CD4-positive, alpha-beta T cell (primary cell): ENCODE measurements at regions of chr3 and their contacts with region 1.

Region 1: DNA sequence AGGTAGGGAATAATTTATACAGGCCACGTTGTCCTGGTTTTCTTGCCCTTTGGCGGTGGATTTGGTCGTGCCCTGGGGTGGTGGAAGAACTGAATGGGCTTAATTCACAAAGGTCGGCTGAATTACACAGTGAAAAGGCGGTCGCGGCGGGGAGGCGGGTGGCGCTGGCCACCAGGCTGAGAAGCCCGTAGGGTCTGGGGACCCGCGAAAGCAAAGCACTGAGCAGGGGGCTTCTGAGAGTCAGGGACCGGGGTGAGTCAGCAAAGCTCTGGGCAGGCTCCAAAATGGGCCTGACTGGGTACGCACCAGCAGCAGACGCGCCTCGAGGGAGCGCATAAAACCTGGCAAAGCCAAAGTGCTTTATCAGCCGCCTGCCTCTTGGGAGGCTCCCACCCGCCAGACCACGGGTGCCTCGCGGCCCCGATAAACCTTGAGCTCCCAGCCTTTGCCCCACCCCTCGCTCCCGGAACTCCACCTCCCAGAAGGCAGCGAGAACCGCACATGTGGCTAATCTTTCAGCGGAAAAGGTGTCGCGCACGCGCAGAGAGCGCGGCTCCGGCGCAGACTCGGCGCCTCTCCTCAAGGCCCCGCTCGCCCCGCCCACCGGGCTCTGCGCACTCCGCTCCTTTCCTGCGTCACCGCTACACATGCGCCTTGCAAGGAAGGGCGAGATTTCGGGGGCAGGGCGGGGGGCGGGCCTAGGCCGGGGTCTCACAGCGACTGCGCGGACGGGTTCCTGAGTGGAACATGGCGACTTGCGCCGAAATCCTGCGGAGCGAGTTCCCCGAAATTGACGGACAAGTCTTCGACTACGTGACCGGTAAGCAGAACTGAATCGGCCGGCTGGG is at the start of gene ABCF3:
- DNase-seq: peak; percentile 98 to 100 (median 99)
- ATAC-seq: peak; percentile 95
- H3K4me3 ChIP-seq: peak within 1 kb of the TSS; percentile 81
- H3K4me3 Mint-ChIP-seq: peak within 1 kb of the TSS; percentile 99
- H3K27ac ChIP-seq: peak within 1 kb of the TSS; percentile 15 to 69
- H3K27ac Mint-ChIP-seq: peak within 1 kb of the TSS; percentile 87
- H3K4me1 ChIP-seq: peaks cover 32% of the 10 kb centered on the region
- H3K4me1 Mint-ChIP-seq: peaks cover 47% of the 10 kb centered on the region
- H3K27me3 ChIP-seq: no peaks in the 10 kb centered on the region
- H3K27me3 Mint-ChIP-seq: no peaks in the 10 kb centered on the region
- CTCF ChIP-seq: no peak
- total RNA-seq, gene ABCF3: 163 to 166 TPM

Region 2: GRCh38 chr3:184017672-184018423 is 167.8 kb before region 1 on chr3 and contains the start of gene ABCC5:
- CTCF ChIA-PET with region 1: no interaction called
- POLR2A ChIA-PET with region 1: no interaction called
- intact Hi-C with region 1: loop called in 1 of 2 experiments (anchors 5 kb)
- DNase-seq: peak; percentile 65 to 92 (median 78)
- ATAC-seq: peak; percentile 94
- H3K4me3 ChIP-seq: peak within 1 kb of the TSS; percentile 96
- H3K4me3 Mint-ChIP-seq: peak within 1 kb of the TSS; percentile 100
- H3K27ac ChIP-seq: peak within 1 kb of the TSS; percentile 23 to 43
- H3K27ac Mint-ChIP-seq: peak within 1 kb of the TSS; percentile 66
- H3K4me1 ChIP-seq: peaks cover 16% of the 10 kb centered on the region
- H3K4me1 Mint-ChIP-seq: peaks cover 26% of the 10 kb centered on the region
- H3K27me3 ChIP-seq: peaks cover 0 to 3% of the 10 kb centered on the region in 2 experiments
- H3K27me3 Mint-ChIP-seq: peaks cover 5% of the 10 kb centered on the region
- CTCF ChIP-seq: peak; percentile 89
- total RNA-seq, gene ABCC5: 10.8 to 11.4 TPM

Region 3: DNA sequence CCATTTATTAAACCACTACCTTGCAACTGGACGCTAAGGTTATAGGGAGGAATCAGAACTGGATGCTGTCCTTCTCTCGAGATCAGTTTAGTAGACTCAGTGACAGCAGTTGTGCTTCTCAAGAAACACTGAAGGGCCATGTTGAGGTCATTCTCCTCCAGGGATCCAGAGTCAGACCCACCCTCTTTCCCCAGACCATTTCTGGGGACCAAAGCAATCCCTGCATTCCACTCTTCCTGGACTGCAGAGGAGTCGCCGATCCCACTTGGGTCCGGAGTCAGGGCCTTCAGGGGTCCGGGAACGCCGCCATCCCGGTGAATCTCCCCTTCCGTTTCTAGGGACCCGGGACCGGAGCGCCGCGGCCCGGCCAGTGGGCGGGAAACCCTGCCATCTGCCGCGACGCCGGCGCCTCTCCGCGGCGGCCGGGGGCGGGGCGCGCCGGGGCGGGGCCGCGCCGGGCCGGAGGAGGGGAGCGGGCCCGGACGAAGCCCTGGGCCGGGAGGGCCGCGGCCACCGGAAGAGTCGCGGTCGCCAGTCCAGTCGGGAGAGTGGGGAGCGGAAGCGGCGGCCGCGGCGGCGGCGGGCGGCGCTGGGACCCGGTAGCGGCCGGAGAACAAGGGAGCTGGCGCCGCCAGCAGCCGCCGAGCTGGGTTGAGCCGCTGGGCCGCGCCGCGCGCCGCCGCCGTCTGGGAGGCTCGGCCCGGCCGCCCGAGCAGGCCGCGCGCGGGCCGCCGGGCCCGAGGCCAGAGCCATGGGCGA is 30.6 kb before region 1 on chr3 and contains the start of gene DVL3:
- CTCF ChIA-PET with region 1: no interaction called
- POLR2A ChIA-PET with region 1: interaction called, 6 read pairs
- intact Hi-C with region 1: loop called in 1 of 2 experiments (anchors 1 kb)
- DNase-seq: peak in 11 of 14 experiments; percentile 7 to 73 (median 44)
- ATAC-seq: peak; percentile 64
- H3K4me3 ChIP-seq: peak within 1 kb of the TSS; percentile 90
- H3K4me3 Mint-ChIP-seq: peak within 1 kb of the TSS; percentile 95
- H3K27ac ChIP-seq: peak within 1 kb of the TSS in 1 of 2 donors; percentile 30
- H3K27ac Mint-ChIP-seq: peak within 1 kb of the TSS; percentile 81
- H3K4me1 ChIP-seq: peaks cover 32% of the 10 kb centered on the region
- H3K4me1 Mint-ChIP-seq: peaks cover 45% of the 10 kb centered on the region
- H3K27me3 ChIP-seq: no peaks in the 10 kb centered on the region
- H3K27me3 Mint-ChIP-seq: no peaks in the 10 kb centered on the region
- CTCF ChIP-seq: no peak
- total RNA-seq, gene DVL3: 30.0 to 31.7 TPM

Region 4: DNA sequence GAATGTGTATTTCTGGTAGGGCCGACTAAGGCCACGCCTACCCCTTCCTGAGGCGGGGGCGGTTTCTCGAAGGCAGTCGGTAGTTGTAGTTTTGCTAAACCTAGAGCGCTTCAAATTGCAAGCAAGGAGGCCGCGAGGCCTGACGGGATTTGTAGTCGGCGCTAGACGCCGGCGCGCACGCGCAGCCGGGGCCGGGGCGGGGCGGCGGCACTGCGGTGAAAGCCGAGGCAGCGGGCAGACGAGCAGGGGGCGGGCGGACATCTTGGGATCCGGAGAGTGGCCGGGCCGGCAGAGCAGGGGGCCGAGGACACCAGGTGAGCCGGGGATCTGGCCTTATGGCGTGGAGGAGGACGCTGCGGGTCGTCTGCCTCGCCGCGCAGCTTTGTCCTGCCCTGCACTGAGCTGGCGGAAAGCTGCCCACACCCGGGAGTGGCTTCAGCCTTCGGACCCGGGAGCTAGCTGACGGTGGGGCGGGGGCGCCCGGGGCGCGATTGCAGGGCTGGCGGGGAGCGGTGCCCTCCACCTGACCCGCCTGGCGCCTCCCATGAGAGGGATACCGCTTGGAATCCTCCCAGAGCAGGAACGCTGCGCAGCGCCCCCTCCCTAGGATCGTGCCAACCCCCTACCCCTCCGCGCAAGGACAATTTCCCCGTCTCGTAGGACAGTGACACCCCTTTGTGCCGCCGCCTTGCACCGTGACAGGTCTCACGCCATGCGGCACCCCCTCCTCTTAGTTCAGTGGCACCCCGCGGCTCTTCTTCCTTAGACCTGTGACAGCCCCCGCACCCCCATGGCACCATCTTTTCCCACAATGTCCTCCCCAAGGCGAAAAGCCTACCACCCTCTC is 10.8 kb before region 1 on chr3 and contains the start of gene AP2M1:
- CTCF ChIA-PET with region 1: interaction called, 3 read pairs
- POLR2A ChIA-PET with region 1: interaction called, 25 read pairs
- intact Hi-C with region 1: loop called (anchors 1 kb)
- DNase-seq: peak; percentile 94 to 99 (median 97)
- ATAC-seq: peak; percentile 98
- H3K4me3 ChIP-seq: peak within 1 kb of the TSS; percentile 87
- H3K4me3 Mint-ChIP-seq: peak within 1 kb of the TSS; percentile 96
- H3K27ac ChIP-seq: peak within 1 kb of the TSS in 1 of 2 donors; percentile 79
- H3K27ac Mint-ChIP-seq: peak within 1 kb of the TSS; percentile 86
- H3K4me1 ChIP-seq: peaks cover 35% of the 10 kb centered on the region
- H3K4me1 Mint-ChIP-seq: peaks cover 42% of the 10 kb centered on the region
- H3K27me3 ChIP-seq: no peaks in the 10 kb centered on the region
- H3K27me3 Mint-ChIP-seq: no peaks in the 10 kb centered on the region
- CTCF ChIP-seq: no peak
- total RNA-seq, gene AP2M1: 123 to 136 TPM

Region 5: DNA sequence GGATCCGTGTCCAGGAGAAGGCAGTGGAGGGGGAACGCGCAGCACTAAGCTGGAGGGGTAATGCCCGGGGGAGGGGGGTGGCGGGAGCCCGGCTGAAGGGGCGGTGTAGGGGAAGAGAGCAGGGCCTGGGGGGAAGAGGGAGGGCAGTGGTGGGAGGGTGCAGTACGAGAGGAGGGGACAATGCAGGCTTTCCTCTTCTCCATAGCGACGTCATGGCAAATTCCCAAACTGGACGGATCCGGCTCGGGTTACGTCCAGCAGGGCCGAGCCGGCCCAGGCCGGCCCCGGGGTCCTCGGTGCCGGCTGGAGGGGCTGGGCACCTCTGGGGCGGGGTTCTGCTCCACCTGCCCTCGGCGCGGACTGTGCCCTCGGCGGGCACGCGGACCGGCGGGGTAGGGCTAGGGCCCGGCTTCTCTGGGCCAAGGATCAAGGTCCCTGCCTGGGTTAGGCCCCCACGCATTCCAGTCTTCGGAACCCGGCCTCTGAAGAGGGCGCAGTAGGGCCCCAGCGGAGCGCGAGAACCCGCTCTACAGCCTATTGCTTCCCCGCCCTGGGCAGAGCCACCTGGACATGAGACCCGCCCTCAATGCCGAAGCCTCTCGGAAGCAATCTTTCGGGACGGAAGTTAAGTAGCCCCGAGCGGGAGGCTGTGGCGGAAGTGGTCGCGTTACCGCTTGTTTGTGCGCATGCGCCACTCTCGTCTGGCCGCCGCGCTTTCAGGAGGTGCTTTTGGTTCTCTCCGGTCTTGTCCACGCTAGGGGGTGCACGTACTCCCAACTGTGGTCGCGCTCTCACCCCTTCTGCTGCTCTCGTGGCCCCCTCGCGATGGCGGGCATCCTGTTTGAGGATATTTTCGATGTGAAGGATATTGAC is 177.2 kb after region 1 on chr3:
- CTCF ChIA-PET with region 1: no interaction called
- POLR2A ChIA-PET with region 1: no interaction called
- intact Hi-C with region 1: loop called in 1 of 2 experiments (anchors 5 kb)
- DNase-seq: peak; percentile 81 to 98 (median 90)
- ATAC-seq: peak; percentile 72
- H3K4me3 ChIP-seq: peak overlapping the region; percentile 94
- H3K4me3 Mint-ChIP-seq: peak overlapping the region; percentile 100
- H3K27ac ChIP-seq: peak overlapping the region; percentile 71 to 80
- H3K27ac Mint-ChIP-seq: peak overlapping the region; percentile 97
- H3K4me1 ChIP-seq: peaks cover 37% of the 10 kb centered on the region
- H3K4me1 Mint-ChIP-seq: peaks cover 26% of the 10 kb centered on the region
- H3K27me3 ChIP-seq: no peaks in the 10 kb centered on the region
- H3K27me3 Mint-ChIP-seq: no peaks in the 10 kb centered on the region
- CTCF ChIP-seq: peak; percentile 48